ENCODE measurements at regions of chr7 and their contacts with region 1.

Region 1: GRCh38 chr7:120360918-120361317 is 87.9 kb downstream of the KCND2 start:
- DNase-seq: peak; percentile 9
- CTCF ChIP-seq: no peak

Region 2: DNA sequence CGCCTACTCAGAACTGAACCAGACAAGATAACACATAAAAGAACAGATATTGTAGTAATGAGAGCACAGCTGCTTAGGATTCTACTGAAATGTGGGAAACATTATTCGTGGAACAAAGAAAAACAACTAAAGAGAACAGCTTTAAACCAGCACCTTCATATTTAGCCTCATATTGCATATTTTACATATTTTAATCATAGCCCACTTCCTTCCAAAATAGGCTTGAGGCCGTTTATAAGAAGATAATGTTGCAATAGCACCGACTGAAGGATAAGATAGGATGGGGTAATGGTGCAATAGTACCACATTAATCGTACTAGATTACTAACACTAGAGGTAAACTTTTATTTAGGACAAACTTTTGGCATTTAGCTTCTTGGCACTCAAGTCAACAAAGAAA is 16.6 kb before region 1 on chr7:
- CTCF ChIA-PET with region 1: interaction called, 12 read pairs
- POLR2A ChIA-PET with region 1: no interaction called
- DNase-seq: no peak
- CTCF ChIP-seq: no peak

Region 3: GRCh38 chr7:120370954-120371353 is 10.0 kb after region 1 on chr7:
- CTCF ChIA-PET with region 1: interaction called, 15 read pairs
- POLR2A ChIA-PET with region 1: no interaction called
- DNase-seq: no peak
- CTCF ChIP-seq: no peak